Tibial artery (tissue), 4 donors: ENCODE measurements at regions of chr6 and their contacts with region 1.

Region 1: GRCh38 chr6:79188885-79189480 is 45.5 kb downstream of the HMGN3 start:
- DNase-seq: no peak
- H3K4me3 ChIP-seq: no peak overlapping the region
- H3K27ac ChIP-seq: no peak overlapping the region
- H3K4me1 ChIP-seq: peaks cover 0 to 13% (median 4%) of the 10 kb centered on the region in 4 donors
- H3K27me3 ChIP-seq: no peaks in the 10 kb centered on the region
- CTCF ChIP-seq: no peak

Region 2: DNA sequence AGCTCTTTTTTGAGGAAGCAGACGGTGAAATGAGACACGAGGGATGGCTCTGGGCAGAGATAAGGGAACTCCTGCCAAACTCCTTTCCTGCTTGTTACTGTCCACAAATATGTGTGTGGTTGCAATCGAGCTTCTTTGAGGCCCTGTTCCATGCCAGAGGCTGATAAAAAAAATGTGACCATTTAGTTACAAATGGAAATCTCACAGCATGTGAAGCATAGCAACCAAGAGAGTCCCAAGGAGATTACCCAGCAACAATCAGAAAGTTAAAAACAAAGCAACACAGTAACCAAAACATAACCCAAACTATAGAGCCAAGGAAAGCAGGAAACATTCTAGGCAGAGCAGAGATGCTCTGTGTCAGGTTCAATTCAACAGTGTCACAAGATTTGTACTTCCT is 80.9 kb after region 1 on chr6:
- intact Hi-C with region 1: loop called (anchors 10 kb)
- DNase-seq: peak in 1 of 2 donors; percentile 34
- H3K4me3 ChIP-seq: no peak overlapping the region
- H3K27ac ChIP-seq: no peak overlapping the region
- H3K4me1 ChIP-seq: no peaks in the 10 kb centered on the region
- H3K27me3 ChIP-seq: no peaks in the 10 kb centered on the region
- CTCF ChIP-seq: no peak

Region 3: DNA sequence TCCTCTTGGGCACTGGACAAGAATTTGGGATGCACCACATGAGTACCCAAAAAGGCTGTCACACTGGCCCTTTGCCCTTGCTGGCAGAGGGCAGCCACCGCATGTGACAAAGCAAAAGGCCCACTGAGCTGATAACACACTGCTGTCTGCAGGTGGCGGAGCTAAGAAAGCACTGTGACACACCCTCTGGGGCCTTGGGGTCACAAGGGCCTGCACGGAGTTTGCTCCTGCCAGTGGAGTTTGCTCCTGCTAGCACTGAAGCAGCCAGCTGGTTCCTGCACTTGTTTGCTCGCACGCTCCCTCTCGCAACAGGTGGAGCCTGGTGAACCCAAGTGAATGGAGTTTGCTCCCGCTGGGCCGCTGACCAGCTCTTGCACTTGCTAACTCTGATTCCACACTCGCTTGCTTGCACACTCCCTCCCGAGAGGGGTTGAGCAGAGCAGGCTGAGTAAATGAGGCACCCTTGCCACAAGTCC is 215.7 kb after region 1 on chr6:
- intact Hi-C with region 1: no loop called
- DNase-seq: no peak
- H3K4me3 ChIP-seq: no peak overlapping the region
- H3K27ac ChIP-seq: no peak overlapping the region
- H3K4me1 ChIP-seq: no peaks in the 10 kb centered on the region
- H3K27me3 ChIP-seq: no peaks in the 10 kb centered on the region
- CTCF ChIP-seq: no peak